ENCODE measurements at regions of chr14 and their contacts with region 1.

Region 1: DNA sequence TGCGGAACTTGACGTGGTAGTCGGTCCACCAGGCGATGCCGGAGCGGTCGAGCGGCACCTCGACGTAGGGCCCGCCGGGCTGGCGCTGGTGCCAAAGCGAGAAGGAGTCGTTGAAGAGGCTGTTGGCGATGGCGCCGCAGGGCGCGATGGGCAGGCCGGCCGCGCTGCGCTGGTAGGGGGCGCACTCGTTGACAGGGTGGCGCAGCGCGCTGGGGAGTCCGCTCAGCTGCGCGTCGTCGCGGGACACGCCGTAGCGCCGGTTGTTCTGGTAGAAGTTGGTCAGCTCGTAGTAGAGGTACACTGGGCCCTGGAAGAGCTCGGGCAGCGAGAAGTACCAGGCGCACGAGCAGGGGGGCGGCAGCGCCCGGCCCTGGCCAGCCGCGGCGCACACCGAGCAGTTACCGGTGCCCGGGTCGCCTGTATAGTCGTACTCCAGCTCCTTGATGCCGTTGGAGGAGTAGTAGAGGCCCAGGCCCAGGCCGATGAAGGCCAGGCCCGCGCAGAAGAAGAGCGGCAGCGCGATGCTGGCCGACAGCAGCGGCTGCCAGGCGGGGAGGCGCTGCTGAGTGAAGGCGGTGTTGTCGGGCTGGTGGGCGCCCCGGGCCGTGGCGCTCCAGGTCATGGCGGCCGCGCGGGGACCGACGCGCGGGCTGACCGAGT is 482 bp downstream of the TMEM30B start:
- DNase-seq: peak; percentile 72 to 86
- H3K4me3 ChIP-seq: peak overlapping the region; percentile 93
- H3K4me3 Mint-ChIP-seq: peak overlapping the region; percentile 98
- H3K27ac Mint-ChIP-seq: peak overlapping the region; percentile 93
- H3K4me1 ChIP-seq: peaks cover 25% of the 10 kb centered on the region
- H3K4me1 Mint-ChIP-seq: peaks cover 22% of the 10 kb centered on the region
- H3K27me3 ChIP-seq: no peaks in the 10 kb centered on the region
- H3K27me3 Mint-ChIP-seq: no peaks in the 10 kb centered on the region
- CTCF ChIP-seq: peak; percentile 64 to 72

Region 2: GRCh38 chr14:59997449-59997848 is 1283.2 kb before region 1 on chr14:
- CTCF ChIA-PET with region 1: no interaction called
- POLR2A ChIA-PET with region 1: no interaction called
- intact Hi-C with region 1: no loop called
- DNase-seq: no peak
- H3K4me3 ChIP-seq: no peak overlapping the region
- H3K4me3 Mint-ChIP-seq: no peak overlapping the region
- H3K27ac Mint-ChIP-seq: no peak overlapping the region
- H3K4me1 ChIP-seq: no peaks in the 10 kb centered on the region
- H3K4me1 Mint-ChIP-seq: peaks cover under 1% of the 10 kb centered on the region
- H3K27me3 ChIP-seq: no peaks in the 10 kb centered on the region
- H3K27me3 Mint-ChIP-seq: no peaks in the 10 kb centered on the region
- CTCF ChIP-seq: no peak

Region 3: DNA sequence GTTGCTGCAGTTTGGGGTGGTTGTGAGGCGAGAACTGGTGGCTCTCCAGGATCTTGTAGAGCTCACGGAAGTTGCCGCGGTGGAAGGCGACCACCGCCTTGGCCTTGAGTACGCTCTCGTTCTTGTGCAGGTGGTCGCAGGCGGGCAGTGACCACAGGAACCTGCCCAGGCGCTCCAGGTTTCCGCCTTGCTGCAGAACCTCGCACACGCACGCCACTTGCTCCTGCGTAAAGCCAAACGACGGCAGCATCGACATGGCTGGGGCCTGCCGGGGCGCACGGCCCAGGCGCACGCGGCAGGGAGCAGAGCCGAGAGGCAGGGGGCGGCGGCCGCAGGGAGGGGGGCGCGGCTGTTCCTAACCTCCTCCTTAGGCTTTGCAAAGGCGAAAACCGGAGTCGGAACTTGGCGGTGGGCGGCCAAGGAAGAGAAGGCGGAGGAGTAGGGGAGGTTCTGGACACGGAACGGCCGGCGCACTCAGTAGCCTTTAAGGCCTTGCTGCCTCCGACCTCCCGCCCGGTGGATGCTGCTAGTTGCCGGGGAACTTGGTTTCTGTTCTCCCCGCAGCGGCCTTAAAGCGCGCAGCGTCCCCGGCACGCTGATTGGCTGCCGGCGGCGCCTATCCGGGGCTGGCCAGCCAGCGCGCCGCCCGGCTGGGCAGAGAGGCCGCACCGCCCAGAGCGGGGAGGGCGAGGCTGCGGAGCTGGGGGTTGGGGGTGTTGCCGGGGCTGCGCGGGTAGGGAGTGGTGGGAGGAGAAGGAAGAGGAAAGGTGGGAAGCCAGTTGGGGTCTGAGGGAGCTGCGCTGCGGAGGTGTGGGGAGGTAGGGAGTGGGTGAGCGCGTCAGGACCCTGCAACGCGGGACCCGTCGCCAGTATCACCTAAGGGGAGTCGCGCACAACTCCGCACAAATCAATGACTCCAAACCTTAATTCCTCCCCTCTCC is 631.5 kb before region 1 on chr14 and contains the start of gene SIX1:
- CTCF ChIA-PET with region 1: no interaction called
- POLR2A ChIA-PET with region 1: no interaction called
- intact Hi-C with region 1: loop called (anchors 1 kb)
- DNase-seq: peak; percentile 75 to 76
- H3K4me3 ChIP-seq: peak within 1 kb of the TSS; percentile 42
- H3K4me3 Mint-ChIP-seq: peak within 1 kb of the TSS; percentile 77
- H3K27ac Mint-ChIP-seq: no peak within 1 kb of the TSS
- H3K4me1 ChIP-seq: peaks cover 36% of the 10 kb centered on the region
- H3K4me1 Mint-ChIP-seq: peaks cover 24% of the 10 kb centered on the region
- H3K27me3 ChIP-seq: peaks cover 6% of the 10 kb centered on the region
- H3K27me3 Mint-ChIP-seq: peaks cover 33% of the 10 kb centered on the region
- CTCF ChIP-seq: no peak
- total RNA-seq, gene SIX1: 0.26 and 0.32 TPM in 2 replicates

Region 4: GRCh38 chr14:61269321-61270083 is 11.2 kb before region 1 on chr14:
- CTCF ChIA-PET with region 1: interaction called, 6 read pairs
- POLR2A ChIA-PET with region 1: interaction called, 3 read pairs
- intact Hi-C with region 1: loop called (anchors 1 kb)
- DNase-seq: peak; percentile 79 to 80
- H3K4me3 ChIP-seq: peak overlapping the region; percentile 40
- H3K4me3 Mint-ChIP-seq: peak overlapping the region; percentile 53
- H3K27ac Mint-ChIP-seq: no peak overlapping the region
- H3K4me1 ChIP-seq: no peaks in the 10 kb centered on the region
- H3K4me1 Mint-ChIP-seq: no peaks in the 10 kb centered on the region
- H3K27me3 ChIP-seq: no peaks in the 10 kb centered on the region
- H3K27me3 Mint-ChIP-seq: peaks cover 10% of the 10 kb centered on the region
- CTCF ChIP-seq: peak; percentile 75 to 79

Region 5: DNA sequence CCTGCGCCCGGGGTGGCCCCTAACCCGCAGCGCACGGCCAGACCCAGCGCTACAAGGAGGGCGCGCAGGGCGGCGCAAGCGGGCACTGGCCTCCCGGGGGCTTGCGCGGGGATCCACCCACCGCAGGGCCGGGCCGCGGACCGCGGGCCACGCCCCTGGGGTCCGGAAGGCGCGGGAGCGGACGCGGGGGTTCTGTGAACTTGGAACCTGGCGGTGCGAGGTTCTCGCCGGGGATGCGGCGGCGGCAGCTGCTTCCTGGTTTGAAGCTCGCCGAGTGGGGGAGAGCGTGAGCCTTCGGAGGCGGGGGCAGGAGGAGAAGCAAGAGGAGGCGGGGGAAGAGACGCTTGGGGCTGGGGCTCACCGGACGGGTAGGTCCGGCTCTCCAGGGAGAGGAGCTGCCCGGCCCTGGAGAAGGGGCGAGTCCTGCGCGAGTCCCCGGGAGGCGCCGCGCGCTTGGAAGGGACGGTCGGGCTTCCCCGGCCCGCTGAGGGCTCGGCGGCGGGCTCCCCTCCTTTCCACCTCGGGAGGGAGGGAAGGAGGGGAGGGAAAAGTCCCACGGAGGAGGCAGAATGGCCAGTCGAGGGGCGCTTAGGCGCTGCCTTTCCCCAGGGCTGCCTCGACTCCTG is 40.8 kb after region 1 on chr14 and contains the start of gene PRKCH:
- CTCF ChIA-PET with region 1: interaction called, 4 read pairs
- POLR2A ChIA-PET with region 1: no interaction called
- intact Hi-C with region 1: loop called (anchors 1 kb)
- DNase-seq: peak; percentile 92
- H3K4me3 ChIP-seq: peak within 1 kb of the TSS; percentile 49
- H3K4me3 Mint-ChIP-seq: peak within 1 kb of the TSS; percentile 83
- H3K27ac Mint-ChIP-seq: peak within 1 kb of the TSS; percentile 71
- H3K4me1 ChIP-seq: 0 out of 2 replicates have a peak, but pooled peaks cover 3% of the 10 kb centered on the region
- H3K4me1 Mint-ChIP-seq: no peaks in the 10 kb centered on the region
- H3K27me3 ChIP-seq: no peaks in the 10 kb centered on the region
- H3K27me3 Mint-ChIP-seq: no peaks in the 10 kb centered on the region
- CTCF ChIP-seq: peak in 1 of 2 experiments; percentile 19
- total RNA-seq, gene PRKCH: 17.8 and 18.3 TPM in 2 replicates

Region 6: DNA sequence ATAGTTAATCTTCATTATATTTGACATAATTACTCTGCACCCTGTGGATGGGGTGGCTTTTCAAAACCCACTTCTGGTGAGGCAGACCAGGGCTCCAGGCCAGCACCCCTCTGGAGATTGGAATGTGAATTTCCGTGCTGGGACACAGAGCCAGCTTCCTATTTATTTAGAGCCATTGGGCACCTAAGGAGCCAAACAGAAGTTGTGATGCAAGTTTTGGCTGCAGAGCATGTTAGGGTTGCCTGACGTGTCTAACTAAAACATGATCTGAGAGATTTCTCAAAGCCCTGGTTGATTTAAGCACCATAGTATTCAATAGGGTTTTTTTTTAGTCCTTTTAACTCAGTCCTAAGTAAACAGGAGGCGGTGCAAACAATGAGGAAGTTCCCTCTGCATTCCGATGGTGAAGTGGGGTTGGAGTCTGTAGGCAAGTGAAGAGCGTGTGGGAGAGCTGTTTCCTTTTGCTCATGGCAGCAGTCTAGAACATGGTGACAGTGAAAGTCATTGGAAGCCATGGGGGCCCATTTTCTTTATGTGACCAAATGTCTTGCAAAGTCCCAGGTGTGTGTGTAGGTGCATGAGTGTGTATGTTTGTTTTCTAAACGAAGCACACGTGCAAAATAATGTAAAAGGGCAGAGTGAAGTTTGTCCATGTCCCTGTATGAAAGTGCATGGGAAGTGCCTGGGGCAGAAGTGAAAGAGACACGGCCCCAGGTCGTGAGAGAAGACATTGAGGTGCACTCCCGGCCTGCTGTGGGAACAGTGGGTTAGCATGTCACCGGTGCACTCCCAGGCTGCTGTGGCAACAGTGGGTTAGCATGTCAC is 158.4 kb after region 1 on chr14:
- CTCF ChIA-PET with region 1: no interaction called
- POLR2A ChIA-PET with region 1: no interaction called
- intact Hi-C with region 1: loop called (anchors 5 kb)
- DNase-seq: peak; percentile 75
- H3K4me3 ChIP-seq: peak overlapping the region; percentile 10
- H3K4me3 Mint-ChIP-seq: peak overlapping the region; percentile 69
- H3K27ac Mint-ChIP-seq: peak overlapping the region; percentile 98
- H3K4me1 ChIP-seq: peaks cover 35% of the 10 kb centered on the region
- H3K4me1 Mint-ChIP-seq: peaks cover 22% of the 10 kb centered on the region
- H3K27me3 ChIP-seq: no peaks in the 10 kb centered on the region
- H3K27me3 Mint-ChIP-seq: no peaks in the 10 kb centered on the region
- CTCF ChIP-seq: no peak

Region 7: DNA sequence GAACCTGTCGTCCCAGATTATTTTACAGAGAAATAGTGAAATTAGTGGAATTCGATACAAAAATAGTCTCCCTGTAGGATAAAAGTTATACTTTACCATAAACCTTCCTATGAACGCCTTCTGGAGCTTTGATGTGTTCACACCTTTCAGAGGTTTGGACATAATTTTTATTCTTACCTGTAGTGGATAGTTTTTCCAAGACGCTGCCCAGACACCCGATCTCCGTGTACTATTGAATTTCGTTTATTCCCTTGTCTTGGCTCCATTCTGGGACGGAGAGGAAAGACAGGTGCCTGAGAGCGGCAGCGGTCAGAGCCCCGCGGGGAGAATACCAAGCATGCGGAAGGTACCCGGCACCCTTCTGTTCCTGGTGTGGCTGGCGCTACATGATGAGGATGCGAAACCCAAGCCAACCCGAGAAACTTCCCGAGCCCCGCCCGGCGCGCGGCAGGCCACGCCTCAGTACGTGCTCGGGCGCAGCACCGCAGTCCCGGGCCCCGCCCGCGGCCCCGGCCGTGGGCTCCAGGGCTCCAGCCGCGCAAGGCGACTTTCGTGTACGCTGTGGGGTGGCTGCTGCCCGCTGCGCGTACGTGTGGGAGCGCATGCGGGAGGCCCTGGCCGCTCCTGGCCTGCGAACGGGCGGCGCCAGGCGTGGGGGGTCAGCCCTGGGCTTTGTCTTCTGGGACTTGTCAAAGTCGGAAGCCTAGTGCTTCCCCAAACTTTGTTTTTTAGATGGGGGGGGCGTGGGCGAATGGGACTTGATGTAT is 470.2 kb after region 1 on chr14:
- CTCF ChIA-PET with region 1: interaction called, 10 read pairs
- POLR2A ChIA-PET with region 1: no interaction called
- intact Hi-C with region 1: no loop called
- DNase-seq: peak; percentile 82 to 86
- H3K4me3 ChIP-seq: peak overlapping the region; percentile 70
- H3K4me3 Mint-ChIP-seq: peak overlapping the region; percentile 80
- H3K27ac Mint-ChIP-seq: peak overlapping the region; percentile 61
- H3K4me1 ChIP-seq: peaks cover 40% of the 10 kb centered on the region
- H3K4me1 Mint-ChIP-seq: peaks cover 15% of the 10 kb centered on the region
- H3K27me3 ChIP-seq: no peaks in the 10 kb centered on the region
- H3K27me3 Mint-ChIP-seq: no peaks in the 10 kb centered on the region
- CTCF ChIP-seq: no peak

Measured in Caco-2 (cell line).